Endothelial cell of umbilical vein (primary cell): ENCODE measurements at regions of chr14 and their contacts with region 1.

Region 1: DNA sequence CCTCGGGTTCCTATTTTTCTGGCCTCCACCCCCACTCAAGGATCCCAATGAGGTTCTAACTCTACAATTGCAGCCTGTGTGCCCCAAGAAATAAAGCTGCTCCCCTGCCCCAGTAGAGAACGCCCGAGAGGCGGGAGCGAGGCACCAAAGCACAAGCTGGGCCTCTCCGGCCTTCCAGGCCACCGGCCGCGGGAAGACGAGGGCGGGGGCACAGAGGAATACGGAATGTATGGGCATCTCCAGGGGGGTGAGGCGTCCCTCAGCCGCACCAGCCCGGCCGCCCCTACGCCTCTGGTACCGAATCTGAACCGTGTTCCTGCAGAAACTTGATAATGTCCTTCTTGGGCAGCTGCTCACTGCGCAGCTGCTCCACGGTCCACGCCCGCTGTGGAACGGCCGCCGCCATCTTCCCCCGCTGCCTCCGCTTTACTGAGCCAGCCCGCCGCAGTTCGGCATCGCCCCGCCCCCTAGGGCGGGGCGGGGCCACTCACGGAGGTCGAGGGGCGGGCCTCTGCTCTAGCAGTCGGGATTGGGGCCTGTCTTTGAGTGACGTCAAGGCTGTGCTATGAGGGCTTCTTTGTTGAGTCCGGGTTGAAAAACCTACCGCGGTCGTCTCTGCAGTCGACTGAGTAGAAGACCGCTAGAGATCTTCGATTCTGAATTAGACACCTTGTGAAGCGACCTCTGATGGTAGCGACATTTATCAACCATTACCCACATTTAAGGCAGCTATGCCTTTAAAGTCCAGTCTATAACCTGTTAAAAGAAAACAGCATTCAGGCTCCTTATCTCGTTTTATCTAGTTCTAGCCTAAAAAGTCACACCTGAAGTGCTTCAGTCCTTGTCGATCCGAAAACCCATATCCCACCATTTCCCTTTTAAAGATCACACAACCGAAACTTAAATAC is at the start of gene FKBP3:
- DNase-seq: peak; percentile 97
- H3K4me3 ChIP-seq: peak within 1 kb of the TSS; percentile 78 to 90 (median 84)
- H3K27ac ChIP-seq: peak within 1 kb of the TSS; percentile 61
- H3K4me1 ChIP-seq: peaks cover 20% of the 10 kb centered on the region
- H3K27me3 ChIP-seq: no peaks in the 10 kb centered on the region
- CTCF ChIP-seq: peak in 1 of 2 donors; percentile 10
- POLR2A ChIP-seq: peak; percentile 88
- total RNA-seq, gene FKBP3: 88.2 and 92.9 TPM in 2 replicates

Region 2: GRCh38 chr14:44180975-44181374 is 953.3 kb before region 1 on chr14:
- CTCF ChIA-PET with region 1: no interaction called
- POLR2A ChIA-PET with region 1: no interaction called
- dilution Hi-C with region 1: no loop called
- intact Hi-C with region 1: no loop called
- DNase-seq: no peak
- H3K4me3 ChIP-seq: no peak overlapping the region
- H3K27ac ChIP-seq: no peak overlapping the region
- H3K4me1 ChIP-seq: no peaks in the 10 kb centered on the region
- H3K27me3 ChIP-seq: no peaks in the 10 kb centered on the region
- CTCF ChIP-seq: no peak
- POLR2A ChIP-seq: no peak

Region 3: GRCh38 chr14:44912041-44912869 is 222.1 kb before region 1 on chr14:
- CTCF ChIA-PET with region 1: interaction called, 34 read pairs
- POLR2A ChIA-PET with region 1: no interaction called
- dilution Hi-C with region 1: no loop called
- intact Hi-C with region 1: loop called (anchors 1 kb)
- DNase-seq: no peak
- H3K4me3 ChIP-seq: peak overlapping the region in 1 of 3 experiments; percentile 30
- H3K27ac ChIP-seq: no peak overlapping the region
- H3K4me1 ChIP-seq: no peaks in the 10 kb centered on the region
- H3K27me3 ChIP-seq: peaks cover 15 to 16% of the 10 kb centered on the region in 2 experiments
- CTCF ChIP-seq: no peak
- POLR2A ChIP-seq: no peak

Region 4: GRCh38 chr14:45015133-45015532 is 119.2 kb before region 1 on chr14:
- CTCF ChIA-PET with region 1: no interaction called
- POLR2A ChIA-PET with region 1: no interaction called
- dilution Hi-C with region 1: no loop called
- intact Hi-C with region 1: no loop called
- DNase-seq: no peak
- H3K4me3 ChIP-seq: no peak overlapping the region
- H3K27ac ChIP-seq: no peak overlapping the region
- H3K4me1 ChIP-seq: no peaks in the 10 kb centered on the region
- H3K27me3 ChIP-seq: no peaks in the 10 kb centered on the region
- CTCF ChIP-seq: no peak
- POLR2A ChIP-seq: no peak

Region 5: GRCh38 chr14:45038256-45038655 is 96.0 kb before region 1 on chr14:
- CTCF ChIA-PET with region 1: no interaction called
- POLR2A ChIA-PET with region 1: no interaction called
- dilution Hi-C with region 1: no loop called
- intact Hi-C with region 1: no loop called
- DNase-seq: no peak
- H3K4me3 ChIP-seq: no peak overlapping the region
- H3K27ac ChIP-seq: no peak overlapping the region
- H3K4me1 ChIP-seq: no peaks in the 10 kb centered on the region
- H3K27me3 ChIP-seq: no peaks in the 10 kb centered on the region
- CTCF ChIP-seq: no peak
- POLR2A ChIP-seq: no peak

Region 6: DNA sequence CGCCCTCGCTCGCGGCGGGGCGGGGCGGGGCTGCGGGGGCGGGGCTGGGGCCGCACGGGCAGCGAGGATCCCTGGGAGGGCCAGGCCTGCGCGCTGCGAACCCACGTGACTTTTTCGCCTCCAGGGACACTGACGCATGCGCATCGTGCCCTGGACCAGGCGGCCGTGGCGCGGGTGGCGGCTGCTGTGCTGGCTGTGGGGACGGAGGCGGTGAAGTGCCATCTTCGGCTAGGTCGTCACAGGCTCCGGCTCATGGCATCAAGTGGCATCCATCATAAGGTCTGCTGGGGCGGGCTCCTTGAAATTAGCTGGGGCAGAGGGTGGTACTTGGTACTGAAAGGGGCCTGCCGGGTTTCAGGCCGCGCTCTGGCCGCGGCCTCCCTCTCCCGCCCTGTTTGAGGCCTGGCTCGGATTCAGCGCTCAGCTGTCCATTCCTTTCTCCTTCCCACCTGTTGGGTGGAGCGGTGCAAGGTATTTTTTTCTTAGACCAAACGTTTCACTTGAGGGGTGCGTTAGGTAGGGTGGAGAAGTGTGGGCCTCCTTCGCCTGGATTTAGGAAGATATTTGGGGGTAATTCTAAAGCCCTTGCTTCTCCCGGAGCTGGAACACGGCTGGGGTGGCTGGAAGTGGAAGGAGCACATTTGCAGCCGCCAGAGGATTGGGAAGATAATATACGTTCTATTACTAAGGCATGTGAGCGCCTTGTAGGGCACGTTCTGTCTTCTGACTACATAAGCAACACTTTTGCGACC is 50.2 kb before region 1 on chr14 and contains the start of gene PRPF39:
- CTCF ChIA-PET with region 1: interaction called, 3 read pairs
- POLR2A ChIA-PET with region 1: no interaction called
- dilution Hi-C with region 1: no loop called
- intact Hi-C with region 1: loop called (anchors 1 kb)
- DNase-seq: peak; percentile 95
- H3K4me3 ChIP-seq: peak within 1 kb of the TSS; percentile 50 to 86 (median 81)
- H3K27ac ChIP-seq: peak within 1 kb of the TSS; percentile 63
- H3K4me1 ChIP-seq: peaks cover 8% of the 10 kb centered on the region
- H3K27me3 ChIP-seq: no peaks in the 10 kb centered on the region
- CTCF ChIP-seq: no peak
- POLR2A ChIP-seq: peak; percentile 97
- total RNA-seq, gene PRPF39: 36.3 and 44.4 TPM in 2 replicates

Region 7: DNA sequence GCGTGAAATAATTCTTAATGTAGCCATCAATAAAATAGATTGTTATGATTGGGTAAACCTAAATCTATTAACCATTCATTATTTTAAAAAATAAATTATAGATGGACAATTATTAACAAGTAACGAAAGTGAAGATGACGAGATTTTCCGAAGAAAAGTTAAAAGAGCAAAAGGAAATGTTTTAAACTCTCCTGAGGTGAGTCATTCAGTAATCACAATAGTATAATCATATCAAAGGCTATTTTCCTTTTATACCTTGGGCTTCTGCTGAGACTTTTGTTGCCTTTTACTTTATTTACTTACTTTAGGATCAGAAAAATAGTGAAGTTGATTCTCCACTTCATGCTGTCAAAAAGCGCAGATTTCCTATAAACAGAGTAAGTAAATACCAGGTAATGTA is 47.0 kb after region 1 on chr14:
- CTCF ChIA-PET with region 1: interaction called, 3 read pairs
- POLR2A ChIA-PET with region 1: no interaction called
- dilution Hi-C with region 1: no loop called
- intact Hi-C with region 1: loop called (anchors 1 kb)
- DNase-seq: peak; percentile 49
- H3K4me3 ChIP-seq: peak overlapping the region in 2 of 3 experiments; percentile 13 to 48
- H3K27ac ChIP-seq: peak overlapping the region; percentile 77
- H3K4me1 ChIP-seq: peaks cover 23% of the 10 kb centered on the region
- H3K27me3 ChIP-seq: no peaks in the 10 kb centered on the region
- CTCF ChIP-seq: no peak
- POLR2A ChIP-seq: no peak